ENCODE measurements at regions of chr9 and their contacts with region 1.

Region 1: GRCh38 chr9:133030317-133031129 is at the start of gene GTF3C5:
- DNase-seq: peak; percentile 77 to 97 (median 94)
- ATAC-seq: peak; percentile 98
- H3K4me3 ChIP-seq: peak within 1 kb of the TSS; percentile 83
- H3K4me3 Mint-ChIP-seq: peak within 1 kb of the TSS; percentile 87 to 100 (median 98)
- H3K27ac ChIP-seq: peak within 1 kb of the TSS; percentile 90
- H3K27ac Mint-ChIP-seq: peak within 1 kb of the TSS; percentile 94 to 99 (median 98)
- H3K4me1 ChIP-seq: peaks cover 13 to 25% of the 10 kb centered on the region in 2 donors
- H3K4me1 Mint-ChIP-seq: peaks cover 34 to 81% (median 59%) of the 10 kb centered on the region in 7 donors
- H3K27me3 ChIP-seq: no peaks in the 10 kb centered on the region
- H3K27me3 Mint-ChIP-seq: no peaks in the 10 kb centered on the region
- total RNA-seq, gene GTF3C5: 43.9 to 77.9 (median 73.9) TPM

Region 2: DNA sequence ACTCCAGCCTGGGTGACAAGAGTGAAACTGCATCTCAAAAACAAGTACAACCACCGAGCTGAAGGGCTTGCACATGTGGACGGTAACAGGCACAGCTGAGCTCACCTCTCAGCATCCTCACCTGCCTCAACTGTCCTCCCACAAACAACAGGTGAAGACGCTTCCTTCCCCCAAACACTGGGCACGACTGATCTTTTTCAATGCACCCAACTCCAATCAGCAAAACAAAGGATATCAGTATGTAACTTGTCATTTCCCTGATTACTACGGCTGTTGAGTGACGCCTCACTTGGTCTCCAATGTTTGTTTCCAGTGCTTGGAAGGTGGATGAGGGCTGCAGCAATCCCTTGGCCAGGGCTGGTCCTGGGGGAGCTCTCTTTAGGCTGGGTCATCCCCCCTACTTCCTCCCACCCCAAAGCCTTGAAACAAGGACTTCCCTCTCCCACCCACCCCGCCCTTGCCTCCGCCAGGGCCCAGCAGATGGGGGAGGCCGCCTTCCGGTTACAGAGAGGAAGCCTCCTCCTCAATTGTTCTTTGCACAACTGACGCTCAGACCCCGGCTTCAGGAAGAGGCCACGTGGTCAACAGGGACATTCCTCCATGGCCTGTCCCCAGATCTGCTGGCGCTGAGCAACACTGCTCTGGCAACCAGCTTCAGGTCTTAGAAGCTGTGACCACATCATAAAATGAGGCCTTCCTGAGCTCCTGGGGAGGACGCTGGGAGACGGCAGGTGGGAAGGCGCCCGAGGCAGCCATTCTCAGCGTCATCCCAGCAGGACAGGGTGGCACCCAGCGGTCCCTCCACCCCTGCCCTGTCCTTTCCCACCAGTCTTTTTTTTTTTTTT is 1760.1 kb before region 1 on chr9:
- CTCF ChIA-PET with region 1: no interaction called
- POLR2A ChIA-PET with region 1: no interaction called
- intact Hi-C with region 1: loop called in 1 of 2 experiments (anchors 5 kb)
- DNase-seq: peak in 8 of 9 donors; percentile 49 to 70 (median 64)
- ATAC-seq: peak; percentile 16
- H3K4me3 ChIP-seq: peak overlapping the region; percentile 74
- H3K4me3 Mint-ChIP-seq: peak overlapping the region; percentile 83 to 100 (median 92)
- H3K27ac ChIP-seq: peak overlapping the region; percentile 96
- H3K27ac Mint-ChIP-seq: peak overlapping the region; percentile 95 to 100 (median 99)
- H3K4me1 ChIP-seq: peaks cover 50 to 63% of the 10 kb centered on the region in 2 donors
- H3K4me1 Mint-ChIP-seq: peaks cover 30 to 61% (median 50%) of the 10 kb centered on the region in 7 donors
- H3K27me3 ChIP-seq: no peaks in the 10 kb centered on the region
- H3K27me3 Mint-ChIP-seq: no peaks in the 10 kb centered on the region

Region 3: DNA sequence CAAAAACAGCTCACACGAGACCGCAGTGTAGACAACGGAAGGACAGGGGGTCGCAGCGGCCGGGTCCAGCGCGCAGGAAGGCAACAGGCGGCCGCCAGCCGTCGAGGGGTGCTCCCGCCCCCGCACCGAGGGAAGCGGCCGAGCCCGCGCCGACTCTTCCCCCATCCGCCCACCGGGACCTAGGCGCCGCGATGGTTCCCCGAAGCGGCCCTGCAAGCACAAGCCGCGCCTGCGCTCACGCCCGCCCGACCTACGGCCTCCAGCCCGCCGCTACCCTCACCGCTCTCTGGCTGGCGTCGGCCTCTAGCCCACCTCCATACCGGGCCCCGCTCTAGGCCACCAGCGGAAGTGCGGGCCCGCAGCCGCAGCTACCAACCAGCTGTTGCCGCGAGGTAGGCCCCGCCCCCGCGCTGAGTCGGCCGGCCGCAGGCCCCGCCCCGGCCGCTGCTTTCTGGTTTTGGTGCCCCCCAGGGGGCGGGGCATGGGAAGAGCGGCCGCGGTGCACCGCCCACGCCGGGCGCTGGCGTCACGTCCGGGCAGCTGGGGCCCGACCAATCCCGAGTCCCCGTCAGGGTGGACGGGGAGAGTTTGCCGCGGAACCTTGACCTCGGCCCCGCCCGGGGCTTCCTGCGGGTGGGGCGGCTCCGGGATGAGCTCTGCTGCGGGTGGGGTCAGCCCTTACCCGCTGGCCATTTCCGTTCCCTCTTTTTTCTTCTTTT is 675.7 kb before region 1 on chr9 and contains the start of gene SETX:
- CTCF ChIA-PET with region 1: no interaction called
- POLR2A ChIA-PET with region 1: no interaction called
- intact Hi-C with region 1: loop called in 1 of 2 experiments (anchors 1 kb)
- DNase-seq: peak; percentile 80 to 96 (median 88)
- ATAC-seq: peak; percentile 95
- H3K4me3 ChIP-seq: peak within 1 kb of the TSS; percentile 96
- H3K4me3 Mint-ChIP-seq: peak within 1 kb of the TSS; percentile 78 to 97 (median 94)
- H3K27ac ChIP-seq: peak within 1 kb of the TSS; percentile 94
- H3K27ac Mint-ChIP-seq: peak within 1 kb of the TSS; percentile 68 to 99 (median 97)
- H3K4me1 ChIP-seq: peaks cover 35 to 39% of the 10 kb centered on the region in 2 donors
- H3K4me1 Mint-ChIP-seq: peaks cover 24 to 48% (median 45%) of the 10 kb centered on the region in 7 donors
- H3K27me3 ChIP-seq: no peaks in the 10 kb centered on the region
- H3K27me3 Mint-ChIP-seq: peaks cover 0 to 3% (median 0%) of the 10 kb centered on the region in 5 donors
- total RNA-seq, gene SETX: 52.0 to 83.2 (median 70.2) TPM

Region 4: GRCh38 chr9:133057006-133057405 is 26.5 kb after region 1 on chr9:
- CTCF ChIA-PET with region 1: interaction called, 3 read pairs
- POLR2A ChIA-PET with region 1: interaction called, 18 read pairs
- intact Hi-C with region 1: no loop called
- DNase-seq: peak in 7 of 9 donors; percentile 24 to 55 (median 41)
- ATAC-seq: peak; percentile 60
- H3K4me3 ChIP-seq: peak overlapping the region; percentile 24
- H3K4me3 Mint-ChIP-seq: peak overlapping the region in 7 of 10 donors; percentile 9 to 85 (median 77)
- H3K27ac ChIP-seq: peak overlapping the region; percentile 50
- H3K27ac Mint-ChIP-seq: peak overlapping the region in 8 of 9 donors; percentile 45 to 95 (median 90)
- H3K4me1 ChIP-seq: peaks cover 5 to 49% of the 10 kb centered on the region in 2 donors
- H3K4me1 Mint-ChIP-seq: peaks cover 25 to 60% (median 45%) of the 10 kb centered on the region in 7 donors
- H3K27me3 ChIP-seq: no peaks in the 10 kb centered on the region
- H3K27me3 Mint-ChIP-seq: no peaks in the 10 kb centered on the region

Region 5: DNA sequence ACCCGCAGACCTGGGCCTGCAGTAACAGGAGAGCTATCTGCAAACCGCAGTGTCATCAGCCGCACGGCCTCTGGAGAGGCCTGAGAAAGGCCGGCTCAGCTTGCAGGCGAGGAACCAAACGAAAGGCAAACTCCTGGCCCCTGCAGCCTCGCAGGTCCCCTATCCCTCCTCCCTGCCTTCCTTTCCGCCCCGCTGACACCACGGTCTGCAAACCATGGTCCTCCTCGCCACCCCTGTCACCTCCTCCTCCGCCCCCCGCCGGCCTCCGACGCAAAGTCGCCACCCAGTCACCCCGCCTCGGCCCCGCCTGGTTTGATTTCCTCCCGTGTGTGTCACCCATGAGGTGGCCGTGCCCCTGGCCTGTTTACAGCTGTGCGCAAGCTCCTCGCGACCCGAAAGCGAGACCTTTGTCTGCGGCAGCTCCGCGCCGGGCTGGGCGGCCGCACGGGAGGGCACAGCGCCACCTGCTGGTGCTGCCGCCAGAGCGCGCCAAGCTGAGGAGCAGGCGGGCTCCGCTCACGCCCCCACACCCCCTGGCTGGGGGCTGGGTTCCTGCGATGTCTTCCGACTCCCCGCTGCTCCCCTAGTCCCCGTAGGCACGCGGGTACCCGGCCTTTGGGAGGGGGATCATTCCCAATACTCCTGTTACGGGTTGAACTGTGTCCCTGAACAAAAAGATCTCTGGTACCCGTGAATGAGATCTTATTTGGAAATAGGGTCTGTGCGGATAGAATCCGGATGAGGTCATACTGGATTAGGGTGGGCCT is 113.8 kb after region 1 on chr9:
- CTCF ChIA-PET with region 1: interaction called, 6 read pairs
- POLR2A ChIA-PET with region 1: interaction called, 14 read pairs
- intact Hi-C with region 1: loop called (anchors 1 kb)
- DNase-seq: peak; percentile 81 to 92 (median 86)
- ATAC-seq: peak; percentile 69
- H3K4me3 ChIP-seq: peak overlapping the region; percentile 34
- H3K4me3 Mint-ChIP-seq: peak overlapping the region; percentile 70 to 88 (median 84)
- H3K27ac ChIP-seq: peak overlapping the region; percentile 70
- H3K27ac Mint-ChIP-seq: peak overlapping the region; percentile 87 to 96 (median 92)
- H3K4me1 ChIP-seq: peaks cover 51 to 71% of the 10 kb centered on the region in 2 donors
- H3K4me1 Mint-ChIP-seq: peaks cover 28 to 74% (median 65%) of the 10 kb centered on the region in 7 donors
- H3K27me3 ChIP-seq: no peaks in the 10 kb centered on the region
- H3K27me3 Mint-ChIP-seq: no peaks in the 10 kb centered on the region

Region 6: DNA sequence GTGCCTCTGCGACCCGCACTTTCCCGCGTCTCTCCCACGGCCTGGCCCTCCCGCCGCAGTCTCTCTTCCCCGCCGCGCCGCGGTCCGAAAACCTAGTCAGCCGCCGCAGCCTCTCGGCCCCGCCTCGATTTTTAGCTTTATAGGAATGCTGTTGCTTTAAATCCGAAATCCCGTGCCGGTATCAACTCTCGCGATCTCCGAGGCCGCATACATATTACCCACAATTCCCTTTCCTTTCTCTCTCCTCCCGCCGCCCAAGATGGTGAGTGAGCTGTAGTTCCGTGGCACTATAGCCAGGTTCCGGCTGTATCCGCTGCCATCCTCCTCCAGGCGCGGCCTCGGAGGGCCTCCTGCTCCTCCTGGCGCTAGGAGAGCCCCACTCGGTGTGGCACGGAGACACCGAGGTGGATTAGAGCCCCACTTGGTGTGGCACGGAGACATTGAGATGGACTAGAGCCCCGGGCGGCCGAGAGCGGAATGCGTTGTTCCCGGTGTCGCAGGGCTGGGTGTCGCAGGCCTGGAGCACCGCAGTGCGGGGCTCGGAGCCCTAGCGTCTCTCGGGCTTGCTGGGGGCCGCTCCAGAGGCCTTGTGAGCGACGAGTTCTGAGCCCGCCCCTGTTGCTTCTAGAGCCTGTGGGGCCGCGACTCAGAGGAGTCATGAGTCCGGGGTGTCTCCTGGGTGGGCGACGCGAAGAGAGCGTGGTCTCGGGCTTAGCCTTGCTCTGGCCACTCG is 317.6 kb after region 1 on chr9 and contains the starts of genes MED22 and RPL7A:
- CTCF ChIA-PET with region 1: interaction called, 3 read pairs
- POLR2A ChIA-PET with region 1: no interaction called
- intact Hi-C with region 1: loop called in 1 of 2 experiments (anchors 2 kb)
- DNase-seq: peak; percentile 72 to 95 (median 92)
- ATAC-seq: peak; percentile 95
- H3K4me3 ChIP-seq: peak within 1 kb of the TSS; percentile 93
- H3K4me3 Mint-ChIP-seq: peak within 1 kb of the TSS; percentile 94 to 100 (median 98)
- H3K27ac ChIP-seq: peak within 1 kb of the TSS; percentile 98
- H3K27ac Mint-ChIP-seq: peak within 1 kb of the TSS; percentile 87 to 99 (median 97)
- H3K4me1 ChIP-seq: peaks cover 19 to 20% of the 10 kb centered on the region in 2 donors
- H3K4me1 Mint-ChIP-seq: peaks cover 23 to 46% (median 39%) of the 10 kb centered on the region in 7 donors
- H3K27me3 ChIP-seq: no peaks in the 10 kb centered on the region
- H3K27me3 Mint-ChIP-seq: peaks cover 0 to 2% (median 0%) of the 10 kb centered on the region in 5 donors
- total RNA-seq, gene MED22: 26.5 to 44.6 (median 32.8) TPM
- total RNA-seq, gene RPL7A: 2,002 to 2,815 (median 2,428) TPM

Region 7: GRCh38 chr9:133459476-133460404 is 429.2 kb after region 1 on chr9 and contains the start of gene CACFD1:
- CTCF ChIA-PET with region 1: no interaction called
- POLR2A ChIA-PET with region 1: interaction called, 4 read pairs
- intact Hi-C with region 1: loop called in 1 of 2 experiments (anchors 1 kb)
- DNase-seq: peak; percentile 81 to 91 (median 85)
- ATAC-seq: peak; percentile 87
- H3K4me3 ChIP-seq: peak within 1 kb of the TSS; percentile 88
- H3K4me3 Mint-ChIP-seq: peak within 1 kb of the TSS; percentile 88 to 94 (median 90)
- H3K27ac ChIP-seq: peak within 1 kb of the TSS; percentile 79
- H3K27ac Mint-ChIP-seq: peak within 1 kb of the TSS; percentile 54 to 94 (median 92)
- H3K4me1 ChIP-seq: peaks cover 6% of the 10 kb centered on the region in 2 donors
- H3K4me1 Mint-ChIP-seq: peaks cover 0 to 7% (median 4%) of the 10 kb centered on the region in 7 donors
- H3K27me3 ChIP-seq: no peaks in the 10 kb centered on the region
- H3K27me3 Mint-ChIP-seq: peaks cover 0 to 10% (median 0%) of the 10 kb centered on the region in 5 donors
- total RNA-seq, gene CACFD1: 0.56 to 4.7 (median 3.1) TPM